ENCODE measurements at regions of chr1 and their contacts with region 1.

Region 1: DNA sequence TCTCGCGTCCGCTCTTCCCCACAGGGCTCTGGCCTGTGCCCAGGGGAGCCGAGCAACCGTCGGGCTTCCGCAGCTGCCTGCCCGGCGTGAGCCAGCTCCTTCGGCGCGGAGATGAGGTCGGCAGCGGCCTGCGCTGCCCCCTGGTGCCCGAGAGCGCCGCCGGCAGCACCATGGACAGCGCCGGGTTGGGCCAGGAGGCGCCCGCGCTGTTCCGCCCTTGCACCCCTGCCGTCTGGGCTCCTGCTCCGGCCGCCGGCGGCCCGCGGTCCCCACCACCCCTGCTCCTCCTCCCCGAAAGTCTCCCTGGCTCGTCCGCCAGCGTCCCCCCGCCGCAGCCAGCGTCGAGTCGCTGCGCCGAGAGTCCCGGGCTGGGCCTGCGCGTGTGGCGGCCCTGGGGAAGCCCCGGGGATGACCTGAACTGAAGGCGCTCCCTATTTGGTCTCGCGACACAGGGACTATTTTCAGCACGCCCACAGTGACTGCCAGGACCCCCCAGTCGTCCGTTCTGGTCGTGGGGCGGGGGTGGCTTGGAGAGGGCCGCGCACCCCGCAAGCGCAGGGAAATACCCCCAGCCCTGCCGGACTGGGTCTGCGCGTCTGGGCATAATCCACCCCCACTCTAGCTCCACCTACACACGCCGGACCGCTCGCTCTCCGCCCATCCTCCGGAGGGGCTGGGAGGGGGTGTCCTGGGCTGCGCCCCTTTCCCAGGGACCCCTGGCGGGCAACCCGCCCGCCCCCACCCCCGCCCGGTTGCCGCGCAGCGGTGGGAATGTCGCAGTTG is 1.3 kb downstream of the HES3 start:
- DNase-seq: peak; percentile 91
- H3K4me3 ChIP-seq: peak overlapping the region; percentile 44 to 48
- H3K27ac ChIP-seq: peak overlapping the region in 1 of 2 experiments; percentile 76; a peak in 2 of 4 replicates
- H3K4me1 ChIP-seq: no peaks in the 10 kb centered on the region; a peak in 1 of 4 replicates
- H3K27me3 ChIP-seq: no peaks in the 10 kb centered on the region
- CTCF ChIP-seq: peak; percentile 65
- EP300 ChIP-seq: no peak
- RAD21 ChIP-seq: peak; percentile 67

Region 2: DNA sequence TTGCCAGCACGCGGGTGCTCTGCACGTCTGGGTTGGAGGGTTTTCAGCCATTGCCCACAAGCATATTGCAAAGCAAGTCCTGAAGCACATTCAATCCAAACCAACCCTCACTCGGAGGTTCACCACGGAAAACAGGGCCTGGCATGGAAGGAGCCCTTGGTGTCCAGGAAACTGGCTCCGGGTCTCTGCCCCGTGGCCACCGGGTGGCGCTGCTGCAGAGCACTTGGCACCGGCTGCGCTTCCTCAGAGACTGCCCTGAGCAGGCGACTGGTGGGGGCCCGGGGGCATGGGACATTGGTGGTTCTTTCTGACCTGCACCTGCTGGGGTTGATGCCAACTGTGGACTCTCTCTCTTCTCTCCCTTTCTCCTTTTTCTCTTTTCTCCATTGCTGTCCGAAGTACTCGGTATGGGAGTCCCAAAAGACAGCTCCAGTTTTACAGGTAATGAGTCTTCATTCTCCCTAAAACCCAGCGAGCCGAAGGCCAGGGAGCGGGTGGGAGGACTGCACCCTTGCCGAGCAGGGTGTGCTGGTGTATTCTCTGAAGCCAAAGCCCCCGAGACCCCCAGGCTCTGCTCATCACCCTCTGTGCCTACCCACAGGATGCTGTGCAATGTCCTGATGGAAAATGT is 203.7 kb before region 1 on chr1:
- CTCF ChIA-PET with region 1: interaction called, 11 read pairs
- POLR2A ChIA-PET with region 1: no interaction called
- DNase-seq: peak; percentile 83
- H3K4me3 ChIP-seq: peak overlapping the region in 1 of 2 experiments; percentile 37; a peak in 1 of 4 replicates
- H3K27ac ChIP-seq: no peak overlapping the region
- H3K4me1 ChIP-seq: peaks cover 5 to 24% of the 10 kb centered on the region in 2 experiments; a peak in 1 of 4 replicates
- H3K27me3 ChIP-seq: no peaks in the 10 kb centered on the region
- CTCF ChIP-seq: peak; percentile 55
- EP300 ChIP-seq: no peak
- RAD21 ChIP-seq: peak; percentile 70

Region 3: GRCh38 chr1:6129313-6129712 is 116.0 kb before region 1 on chr1:
- CTCF ChIA-PET with region 1: no interaction called
- POLR2A ChIA-PET with region 1: no interaction called
- DNase-seq: no peak
- H3K4me3 ChIP-seq: no peak overlapping the region
- H3K27ac ChIP-seq: no peak overlapping the region
- H3K4me1 ChIP-seq: no peaks in the 10 kb centered on the region
- H3K27me3 ChIP-seq: no peaks in the 10 kb centered on the region
- CTCF ChIP-seq: no peak
- EP300 ChIP-seq: no peak
- RAD21 ChIP-seq: no peak

Region 4: DNA sequence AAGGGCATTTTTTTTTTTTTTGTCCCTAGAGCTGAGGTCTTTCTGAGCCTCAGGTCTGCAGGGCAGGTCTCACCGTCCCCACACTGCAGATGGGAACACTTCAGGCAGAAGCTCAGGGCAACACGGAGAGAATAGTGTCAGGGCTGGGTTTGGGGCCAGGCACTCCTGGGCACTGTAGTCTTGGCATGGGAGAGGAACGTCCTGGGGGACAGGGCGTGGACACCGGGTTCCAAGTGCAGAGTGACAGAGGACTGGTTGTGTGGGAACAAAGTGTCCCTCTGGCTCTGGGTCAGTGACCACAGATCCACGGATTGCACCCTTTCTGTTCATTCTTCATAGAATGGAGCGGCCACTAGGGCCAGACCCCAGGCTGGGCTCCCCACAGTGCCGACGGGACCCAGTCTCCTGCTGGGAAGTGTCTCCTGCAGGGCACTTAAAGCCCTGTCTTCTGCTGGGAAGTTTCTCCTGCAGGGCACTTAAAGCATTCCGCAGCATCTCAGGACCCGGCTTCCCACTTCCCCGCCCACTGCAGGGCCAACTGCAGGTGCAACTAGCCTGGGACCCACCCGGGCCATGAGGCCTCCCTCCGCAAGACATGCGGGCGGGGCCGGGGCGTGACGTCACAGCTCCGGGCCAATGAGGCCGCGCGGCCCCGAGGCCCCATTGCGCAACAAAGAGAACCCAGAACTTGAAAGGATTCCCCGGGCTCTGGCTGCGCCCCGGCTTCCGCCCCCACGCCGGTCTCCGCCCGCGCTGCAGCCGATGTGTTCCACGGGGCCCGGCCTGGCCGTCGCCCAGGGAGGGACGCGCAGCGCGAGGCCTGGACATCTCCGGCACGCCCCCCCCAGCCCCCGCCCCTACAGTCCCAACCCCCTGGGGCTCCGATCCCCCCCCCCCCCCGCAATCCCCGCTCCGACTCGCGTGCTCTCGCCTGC is 14.5 kb after region 1 on chr1:
- CTCF ChIA-PET with region 1: interaction called, 68 read pairs
- POLR2A ChIA-PET with region 1: interaction called, 3 read pairs
- DNase-seq: peak; percentile 95
- H3K4me3 ChIP-seq: peak overlapping the region; percentile 57 to 63; a peak in 3 of 4 replicates
- H3K27ac ChIP-seq: peak overlapping the region in 1 of 2 experiments; percentile 58; a peak in 1 of 4 replicates
- H3K4me1 ChIP-seq: peaks cover 0 to 27% of the 10 kb centered on the region in 2 experiments; a peak in 1 of 4 replicates
- H3K27me3 ChIP-seq: no peaks in the 10 kb centered on the region
- CTCF ChIP-seq: no peak
- EP300 ChIP-seq: no peak
- RAD21 ChIP-seq: no peak

Region 5: DNA sequence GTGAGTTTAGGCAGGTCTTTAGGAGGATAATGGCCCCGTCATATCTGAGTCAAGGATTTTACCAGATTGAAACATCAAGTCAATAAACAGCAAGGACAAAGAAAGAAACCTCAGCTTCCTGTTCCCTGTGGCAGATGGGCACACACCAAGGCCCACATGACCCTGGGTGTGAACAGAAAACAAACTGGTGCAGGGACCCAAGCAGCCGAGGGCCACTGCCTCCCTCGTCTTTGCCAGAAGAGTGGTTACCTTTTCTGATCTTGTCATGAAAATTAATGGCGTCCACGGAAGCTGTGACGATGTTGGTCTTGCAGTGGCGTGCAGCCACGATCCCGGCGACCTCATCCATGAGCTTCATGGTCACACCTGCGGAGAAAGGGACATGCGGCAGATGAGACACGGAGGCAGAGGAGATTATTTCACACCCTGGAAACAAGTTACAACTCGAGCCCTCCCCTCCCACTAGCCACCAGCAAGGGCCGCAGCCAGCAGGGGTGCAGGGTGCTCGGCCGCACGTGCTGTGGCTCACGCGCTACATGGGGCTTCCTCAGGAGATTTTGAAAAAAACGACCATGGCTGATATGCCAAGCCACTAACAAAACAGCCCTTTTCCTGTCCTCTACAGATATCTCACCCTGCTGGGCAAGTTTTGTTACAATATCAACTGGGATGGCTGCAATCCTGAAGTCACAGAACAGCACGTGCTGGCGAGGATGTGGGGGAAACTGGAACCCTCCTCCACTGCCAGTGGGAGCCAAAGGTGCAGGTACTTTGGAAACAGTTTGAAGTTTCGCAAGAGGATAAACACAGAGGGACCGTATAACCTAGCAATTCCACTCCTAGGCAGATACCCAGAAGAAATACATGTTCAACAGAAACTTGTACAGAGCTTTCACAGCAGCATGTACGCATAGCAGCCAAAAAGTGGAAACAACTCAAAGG is 49.6 kb after region 1 on chr1:
- CTCF ChIA-PET with region 1: interaction called, 11 read pairs
- POLR2A ChIA-PET with region 1: no interaction called
- DNase-seq: no peak
- H3K4me3 ChIP-seq: no peak overlapping the region
- H3K27ac ChIP-seq: no peak overlapping the region
- H3K4me1 ChIP-seq: peaks cover 0 to 14% of the 10 kb centered on the region in 2 experiments; a peak in 1 of 4 replicates
- H3K27me3 ChIP-seq: no peaks in the 10 kb centered on the region
- CTCF ChIP-seq: no peak
- EP300 ChIP-seq: no peak
- RAD21 ChIP-seq: no peak

Region 6: DNA sequence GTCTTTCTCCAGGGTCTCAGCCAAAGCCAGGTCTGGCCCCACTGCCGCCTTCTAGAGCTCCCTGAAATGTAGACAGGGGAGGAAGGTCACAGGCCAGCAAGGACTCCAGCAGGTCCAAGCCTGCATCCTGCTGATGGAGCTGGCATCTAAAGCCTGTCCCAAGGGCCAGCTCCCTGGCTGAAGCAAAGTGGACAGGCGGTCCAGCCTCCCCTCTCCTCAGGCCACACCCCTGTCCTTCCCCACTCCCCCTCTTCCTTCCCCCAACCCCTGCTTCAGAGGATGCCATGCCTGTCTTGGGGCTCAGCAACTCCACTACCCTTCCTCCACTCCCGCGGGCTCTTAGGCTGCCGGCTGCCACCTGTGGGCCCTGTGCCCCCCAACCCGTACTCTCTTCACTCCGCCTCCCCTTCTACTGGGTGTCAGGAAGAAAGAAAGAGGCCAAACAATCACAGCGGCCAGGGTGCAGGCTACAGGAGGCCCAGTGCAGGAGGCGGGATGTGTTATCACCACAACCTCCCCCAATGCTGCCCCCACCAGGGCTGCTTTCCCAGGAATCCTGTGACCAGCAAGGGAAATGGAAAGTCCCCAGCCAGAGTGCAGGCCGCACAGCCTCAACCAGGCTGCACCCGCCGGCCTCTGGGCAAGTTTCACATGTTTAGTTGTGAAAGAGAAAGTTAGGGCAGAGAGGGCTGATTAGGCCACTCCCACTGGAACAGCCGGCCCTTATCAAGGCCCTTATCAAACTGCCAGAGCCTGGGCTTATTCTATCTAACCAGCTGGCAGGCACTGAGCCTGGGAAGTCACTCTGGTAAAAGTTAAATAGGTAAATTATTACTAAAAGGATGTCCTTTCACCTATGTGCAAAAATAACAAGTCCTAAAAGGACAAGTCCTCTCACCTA is 114.2 kb after region 1 on chr1:
- CTCF ChIA-PET with region 1: interaction called, 123 read pairs
- POLR2A ChIA-PET with region 1: no interaction called
- DNase-seq: peak; percentile 81
- H3K4me3 ChIP-seq: no peak overlapping the region
- H3K27ac ChIP-seq: peak overlapping the region; percentile 69 to 79
- H3K4me1 ChIP-seq: peaks cover 10 to 67% of the 10 kb centered on the region in 2 experiments
- H3K27me3 ChIP-seq: no peaks in the 10 kb centered on the region
- CTCF ChIP-seq: 0 out of 2 replicates have a peak, but pooled peaks have one; percentile 11
- EP300 ChIP-seq: peak in 1 of 2 experiments; percentile 37; a peak in 1 of 4 replicates
- RAD21 ChIP-seq: no peak; the same call in 1 of the 2 replicates

Region 7: DNA sequence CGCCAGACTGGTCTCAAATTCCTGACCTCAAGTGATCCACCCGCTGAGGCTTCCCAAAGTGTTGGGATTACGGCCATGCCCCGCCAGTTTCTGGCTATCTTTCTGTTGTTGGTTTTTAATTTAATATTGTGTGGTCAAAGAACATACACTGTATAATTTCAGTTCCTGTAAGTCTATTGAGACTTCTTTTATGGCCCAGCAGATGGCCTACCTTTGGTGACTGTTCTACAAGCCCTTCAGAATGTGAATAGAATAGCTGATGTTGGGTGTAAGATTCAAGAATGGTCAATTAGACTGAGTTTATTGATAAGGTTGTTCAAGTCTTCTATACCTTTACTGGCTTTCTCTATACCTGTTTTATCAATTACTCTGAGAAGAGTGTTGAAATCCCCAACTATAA is 163.8 kb after region 1 on chr1:
- CTCF ChIA-PET with region 1: interaction called, 131 read pairs
- POLR2A ChIA-PET with region 1: no interaction called
- DNase-seq: no peak
- H3K4me3 ChIP-seq: no peak overlapping the region
- H3K27ac ChIP-seq: no peak overlapping the region
- H3K4me1 ChIP-seq: no peaks in the 10 kb centered on the region
- H3K27me3 ChIP-seq: no peaks in the 10 kb centered on the region
- CTCF ChIP-seq: no peak
- EP300 ChIP-seq: no peak
- RAD21 ChIP-seq: no peak

Region 8: GRCh38 chr1:6438047-6438525 is 192.8 kb after region 1 on chr1:
- CTCF ChIA-PET with region 1: interaction called, 100 read pairs
- POLR2A ChIA-PET with region 1: no interaction called
- DNase-seq: peak; percentile 88
- H3K4me3 ChIP-seq: no peak overlapping the region; a peak in 1 of 4 replicates
- H3K27ac ChIP-seq: no peak overlapping the region
- H3K4me1 ChIP-seq: no peaks in the 10 kb centered on the region; a peak in 1 of 4 replicates
- H3K27me3 ChIP-seq: no peaks in the 10 kb centered on the region
- CTCF ChIP-seq: peak; percentile 83
- EP300 ChIP-seq: no peak
- RAD21 ChIP-seq: peak; percentile 70

Measured in SK-N-SH (cell line).